ENCODE measurements at regions of chr13 and their contacts with region 1.

Region 1: DNA sequence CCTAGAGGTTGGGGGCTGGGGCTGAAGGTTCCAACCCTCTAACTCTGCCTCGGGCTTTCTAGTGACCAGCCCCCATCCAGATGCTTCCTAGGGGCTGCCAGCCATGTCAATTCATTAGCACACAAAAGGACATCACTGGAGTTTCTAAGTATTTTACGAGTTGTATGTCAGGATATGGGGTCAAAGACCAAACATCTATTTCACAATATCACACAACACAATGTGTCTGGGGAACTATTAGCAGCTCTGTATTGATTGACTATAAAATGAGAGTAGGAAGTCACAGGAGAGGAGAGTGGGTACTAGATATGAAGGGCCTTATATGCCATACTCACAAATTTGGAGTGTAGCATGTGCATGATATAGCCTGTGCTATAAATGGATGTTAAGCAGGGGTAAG is 42.1 kb downstream of the LPAR6 start:
- DNase-seq: no peak

Region 2: GRCh38 chr13:48383384-48383783 is 12.6 kb after region 1 on chr13:
- intact Hi-C with region 1: loop called (anchors 1 kb)
- DNase-seq: no peak

Measured in cardiac septum (tissue), 1 donor.